AG04450 (cell line): ENCODE measurements at regions of chr19 and their contacts with region 1.

Region 1: DNA sequence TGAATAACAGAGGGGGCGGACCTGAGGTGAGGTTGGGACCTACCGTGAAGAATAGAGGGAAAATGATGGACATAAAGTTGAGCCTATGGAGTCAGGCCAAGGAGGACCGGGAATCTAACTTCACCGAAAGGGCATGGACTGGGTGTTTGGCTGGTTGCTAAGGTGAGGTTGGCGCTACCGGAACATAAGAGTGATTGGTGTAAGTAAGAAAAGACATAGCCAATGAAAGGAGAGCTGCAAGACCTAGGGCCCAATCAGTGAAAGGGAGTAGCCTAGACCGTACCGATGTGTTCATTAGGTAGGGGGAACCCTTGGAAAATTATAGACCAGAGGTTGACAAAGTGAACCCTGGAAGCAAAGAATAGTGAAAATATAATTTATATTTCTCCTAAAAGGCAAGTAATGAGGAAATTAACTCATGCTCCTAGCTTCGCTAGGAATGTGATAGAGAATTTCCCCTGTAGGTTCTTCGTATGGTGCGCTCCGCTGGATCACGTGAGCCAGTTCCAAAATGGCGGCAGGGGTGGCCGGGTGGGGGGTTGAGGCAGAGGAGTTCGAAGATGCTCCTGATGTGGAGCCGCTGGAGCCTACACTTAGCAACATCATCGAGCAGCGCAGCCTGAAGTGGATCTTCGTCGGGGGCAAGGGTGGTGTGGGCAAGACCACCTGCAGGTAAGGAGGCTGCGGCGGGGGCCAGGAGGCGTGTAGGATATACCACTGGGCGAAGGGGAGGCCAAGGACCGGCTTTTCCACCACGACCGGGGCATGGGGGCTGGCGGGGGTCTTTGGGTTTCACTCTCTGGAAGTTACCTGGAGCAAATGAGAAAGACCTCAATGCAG is at the start of gene GET3:
- DNase-seq: peak; percentile 100
- H3K4me3 ChIP-seq: peak within 1 kb of the TSS; percentile 99
- H3K27ac ChIP-seq: peak within 1 kb of the TSS; percentile 77
- H3K27me3 ChIP-seq: no peaks in the 10 kb centered on the region
- CTCF ChIP-seq: no peak
- polyA plus RNA-seq, gene GET3: 114 and 129 TPM in 2 replicates

Region 2: DNA sequence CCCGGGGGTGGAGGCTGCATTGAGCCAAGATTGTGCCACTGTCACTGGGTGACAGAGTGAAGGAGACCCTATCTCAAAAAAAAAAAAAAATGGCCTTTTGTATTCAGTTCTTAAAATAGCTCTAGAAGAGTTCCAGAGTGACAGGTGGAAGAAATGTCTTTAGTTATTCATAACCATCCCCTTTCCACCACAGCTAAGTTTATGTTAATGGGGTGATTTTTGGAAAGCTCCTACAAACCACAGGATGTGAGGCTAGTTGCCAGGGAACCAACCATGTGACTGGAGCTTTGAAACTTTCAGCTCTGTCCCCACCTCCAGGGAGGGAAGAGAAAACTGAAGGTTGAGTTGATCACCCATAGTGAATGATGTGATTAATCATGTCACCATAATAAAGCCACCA is 133.5 kb before region 1 on chr19:
- CTCF ChIA-PET with region 1: no interaction called
- POLR2A ChIA-PET with region 1: no interaction called
- DNase-seq: no peak
- H3K4me3 ChIP-seq: no peak overlapping the region
- H3K27ac ChIP-seq: no peak overlapping the region
- H3K27me3 ChIP-seq: no peaks in the 10 kb centered on the region
- CTCF ChIP-seq: no peak

Region 3: DNA sequence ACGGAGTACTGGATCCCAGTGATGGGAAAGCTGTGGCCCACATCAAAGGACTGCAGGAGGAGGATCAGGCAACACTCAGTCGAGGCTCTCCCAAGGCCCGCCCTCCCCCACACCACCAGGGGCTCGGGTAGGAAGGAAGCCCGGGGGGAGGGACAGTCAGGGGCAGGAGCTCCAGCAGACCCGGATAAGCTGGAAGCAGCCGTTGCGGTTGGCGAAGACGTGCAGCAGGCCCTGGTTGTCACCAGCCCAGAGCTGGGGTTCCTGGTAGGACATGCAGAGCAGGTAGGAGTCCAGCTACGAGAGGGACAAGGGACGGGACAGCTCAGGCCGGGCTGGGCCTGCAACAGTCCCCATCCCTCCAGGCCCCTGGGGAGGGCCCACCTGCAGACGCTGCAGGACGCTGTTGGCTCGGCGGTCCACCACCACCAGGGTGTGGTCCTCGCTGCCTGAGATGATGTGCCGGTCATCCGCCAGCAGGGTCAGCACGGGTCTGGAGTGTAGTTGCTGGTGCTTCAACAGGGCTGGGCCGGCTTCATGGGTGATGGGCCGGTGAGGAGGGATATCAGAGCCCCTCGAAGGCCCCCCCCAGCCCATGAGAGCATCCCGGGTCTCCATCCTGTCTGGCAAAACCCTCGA is 47.5 kb before region 1 on chr19:
- CTCF ChIA-PET with region 1: no interaction called
- POLR2A ChIA-PET with region 1: no interaction called
- DNase-seq: no peak
- H3K4me3 ChIP-seq: no peak overlapping the region
- H3K27ac ChIP-seq: no peak overlapping the region
- H3K27me3 ChIP-seq: no peaks in the 10 kb centered on the region
- CTCF ChIP-seq: no peak

Region 4: DNA sequence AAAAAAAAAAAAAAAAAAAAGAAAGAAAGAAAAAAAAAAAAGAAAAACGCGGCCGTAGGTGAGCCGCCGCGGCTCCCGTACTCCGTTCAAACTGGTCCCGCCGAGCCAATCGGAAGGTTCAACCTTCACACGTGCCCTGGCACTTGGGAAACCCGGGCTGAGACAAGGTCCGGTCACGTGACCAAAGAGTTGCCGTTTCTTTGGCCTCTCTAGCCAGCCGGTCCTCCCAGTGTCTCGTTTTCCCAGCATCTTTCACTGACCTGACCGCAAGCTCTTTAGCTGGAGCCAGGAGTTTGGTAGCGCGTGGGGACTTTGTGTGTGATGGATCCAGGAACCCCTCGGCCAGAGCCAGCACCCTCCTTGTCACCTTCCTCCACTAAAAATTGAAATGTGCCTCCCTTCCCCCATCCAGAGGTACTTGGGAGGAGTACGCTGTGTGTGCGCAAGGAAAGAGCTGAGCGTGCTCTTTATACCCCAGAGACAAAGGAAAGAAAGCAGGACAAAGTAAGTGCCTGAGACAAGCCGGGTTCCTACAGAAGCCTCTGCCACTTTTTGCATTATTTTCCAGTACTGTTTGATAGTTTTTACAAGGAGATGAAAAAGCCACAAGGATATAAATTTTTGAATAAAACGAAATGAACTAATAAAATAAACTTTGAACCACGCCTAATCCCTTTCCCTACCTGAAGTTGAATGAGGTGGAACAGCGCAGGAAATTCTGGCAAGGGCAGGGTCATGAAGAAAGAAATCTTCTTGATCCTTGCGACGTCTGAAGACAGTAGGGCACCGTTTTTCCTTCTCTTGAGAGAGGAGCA is 14.4 kb before region 1 on chr19:
- CTCF ChIA-PET with region 1: interaction called, 4 read pairs
- POLR2A ChIA-PET with region 1: interaction called, 19 read pairs
- DNase-seq: peak; percentile 98
- H3K4me3 ChIP-seq: peak overlapping the region; percentile 83
- H3K27ac ChIP-seq: peak overlapping the region; percentile 82
- H3K27me3 ChIP-seq: no peaks in the 10 kb centered on the region
- CTCF ChIP-seq: no peak

Region 5: DNA sequence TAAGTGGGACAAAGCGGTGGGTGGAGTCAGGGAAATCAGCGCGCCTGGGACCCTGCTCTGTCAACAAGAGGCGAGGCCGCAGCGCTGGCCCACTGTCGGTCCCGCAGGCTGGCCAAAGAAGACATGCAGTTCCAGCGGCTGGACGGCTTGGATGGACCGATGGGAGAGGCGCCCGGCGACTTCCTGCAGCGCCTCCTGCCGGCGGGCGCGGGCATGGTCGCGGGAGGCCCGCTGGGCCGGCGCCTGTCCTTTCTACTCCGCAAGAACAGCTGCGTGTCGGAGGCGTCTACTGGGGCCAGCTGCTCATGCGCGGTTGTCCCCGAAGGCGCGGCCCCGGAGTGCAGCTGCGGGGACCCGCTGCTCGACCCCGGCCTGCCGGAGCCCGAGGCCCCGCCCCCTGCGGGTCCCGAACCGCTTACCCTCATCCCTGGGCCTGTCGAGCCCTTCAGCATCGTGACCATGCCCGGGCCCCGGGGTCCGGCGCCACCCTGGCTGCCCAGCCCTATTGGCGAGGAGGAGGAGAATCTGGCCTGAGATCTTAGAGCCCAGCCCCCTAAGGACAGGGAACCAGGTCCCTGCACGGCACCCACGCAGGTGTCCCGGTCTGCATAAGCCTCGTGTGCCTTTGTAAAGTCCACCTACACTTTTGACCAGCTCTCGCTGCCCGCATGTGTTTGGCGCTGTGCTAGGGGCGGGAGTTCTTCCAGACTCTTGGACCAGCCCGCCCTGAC is 20.5 kb after region 1 on chr19:
- CTCF ChIA-PET with region 1: interaction called, 27 read pairs
- POLR2A ChIA-PET with region 1: interaction called, 3 read pairs
- DNase-seq: no peak
- H3K4me3 ChIP-seq: peak overlapping the region; percentile 53
- H3K27ac ChIP-seq: no peak overlapping the region
- H3K27me3 ChIP-seq: peaks cover 3% of the 10 kb centered on the region
- CTCF ChIP-seq: peak; percentile 76

Region 6: GRCh38 chr19:14277608-14278007 is 1540.4 kb after region 1 on chr19:
- CTCF ChIA-PET with region 1: no interaction called
- POLR2A ChIA-PET with region 1: no interaction called
- DNase-seq: no peak
- H3K4me3 ChIP-seq: no peak overlapping the region
- H3K27ac ChIP-seq: no peak overlapping the region
- H3K27me3 ChIP-seq: peaks cover 25% of the 10 kb centered on the region
- CTCF ChIP-seq: no peak